MCF 10A (cell line): ENCODE measurements at regions of chr2 and their contacts with region 1.

Region 1: GRCh38 chr2:27303093-27304025 is 4.9 kb downstream of the UCN start:
- DNase-seq: peak; percentile 77
- H3K4me3 Mint-ChIP-seq: peak overlapping the region; percentile 31
- H3K27ac Mint-ChIP-seq: no peak overlapping the region
- H3K4me1 Mint-ChIP-seq: no peaks in the 10 kb centered on the region
- H3K27me3 Mint-ChIP-seq: no peaks in the 10 kb centered on the region
- CTCF ChIP-seq: peak; percentile 76

Region 2: GRCh38 chr2:27074916-27075871 is 228.2 kb before region 1 on chr2:
- CTCF ChIA-PET with region 1: no interaction called
- POLR2A ChIA-PET with region 1: no interaction called
- intact Hi-C with region 1: no loop called
- DNase-seq: no peak
- H3K4me3 Mint-ChIP-seq: no peak overlapping the region
- H3K27ac Mint-ChIP-seq: no peak overlapping the region
- H3K4me1 Mint-ChIP-seq: peaks cover 7% of the 10 kb centered on the region
- H3K27me3 Mint-ChIP-seq: peaks cover 28% of the 10 kb centered on the region
- CTCF ChIP-seq: no peak

Region 3: DNA sequence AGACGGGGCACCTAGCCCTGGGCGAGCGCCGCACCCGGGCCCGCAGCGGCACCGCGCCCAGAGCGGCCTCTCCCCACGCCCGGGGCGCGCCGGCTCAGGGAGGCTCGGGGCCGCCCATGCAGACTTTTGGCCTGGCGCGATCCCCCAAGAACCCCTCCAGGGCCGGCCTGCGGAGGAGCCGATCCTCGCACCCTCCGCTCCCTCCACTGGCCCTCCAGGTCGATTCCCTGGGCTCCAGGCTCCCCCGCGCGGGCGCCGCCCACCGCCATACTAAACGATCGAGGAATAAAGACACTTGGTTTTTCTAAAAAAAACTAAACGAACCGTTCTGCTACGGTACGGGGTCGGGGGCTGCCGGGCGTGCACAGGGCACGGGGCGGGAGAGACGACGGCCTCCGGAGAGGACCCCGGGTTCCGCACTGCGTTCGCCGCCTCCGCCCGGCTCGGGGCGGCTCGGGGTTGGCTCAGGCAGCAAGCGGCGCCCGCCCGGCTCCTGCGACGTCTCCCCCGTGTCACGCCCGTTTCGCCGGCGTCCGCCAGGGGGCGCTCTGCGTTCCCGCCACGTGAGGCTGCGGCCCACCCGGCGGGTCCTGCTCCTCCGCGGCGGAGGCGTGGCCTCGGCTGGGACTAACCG is 217.2 kb before region 1 on chr2:
- CTCF ChIA-PET with region 1: interaction called, 14 read pairs
- POLR2A ChIA-PET with region 1: no interaction called
- intact Hi-C with region 1: no loop called
- DNase-seq: peak; percentile 92
- H3K4me3 Mint-ChIP-seq: peak overlapping the region; percentile 75
- H3K27ac Mint-ChIP-seq: no peak overlapping the region
- H3K4me1 Mint-ChIP-seq: peaks cover 5% of the 10 kb centered on the region
- H3K27me3 Mint-ChIP-seq: no peaks in the 10 kb centered on the region
- CTCF ChIP-seq: peak; percentile 87

Region 4: DNA sequence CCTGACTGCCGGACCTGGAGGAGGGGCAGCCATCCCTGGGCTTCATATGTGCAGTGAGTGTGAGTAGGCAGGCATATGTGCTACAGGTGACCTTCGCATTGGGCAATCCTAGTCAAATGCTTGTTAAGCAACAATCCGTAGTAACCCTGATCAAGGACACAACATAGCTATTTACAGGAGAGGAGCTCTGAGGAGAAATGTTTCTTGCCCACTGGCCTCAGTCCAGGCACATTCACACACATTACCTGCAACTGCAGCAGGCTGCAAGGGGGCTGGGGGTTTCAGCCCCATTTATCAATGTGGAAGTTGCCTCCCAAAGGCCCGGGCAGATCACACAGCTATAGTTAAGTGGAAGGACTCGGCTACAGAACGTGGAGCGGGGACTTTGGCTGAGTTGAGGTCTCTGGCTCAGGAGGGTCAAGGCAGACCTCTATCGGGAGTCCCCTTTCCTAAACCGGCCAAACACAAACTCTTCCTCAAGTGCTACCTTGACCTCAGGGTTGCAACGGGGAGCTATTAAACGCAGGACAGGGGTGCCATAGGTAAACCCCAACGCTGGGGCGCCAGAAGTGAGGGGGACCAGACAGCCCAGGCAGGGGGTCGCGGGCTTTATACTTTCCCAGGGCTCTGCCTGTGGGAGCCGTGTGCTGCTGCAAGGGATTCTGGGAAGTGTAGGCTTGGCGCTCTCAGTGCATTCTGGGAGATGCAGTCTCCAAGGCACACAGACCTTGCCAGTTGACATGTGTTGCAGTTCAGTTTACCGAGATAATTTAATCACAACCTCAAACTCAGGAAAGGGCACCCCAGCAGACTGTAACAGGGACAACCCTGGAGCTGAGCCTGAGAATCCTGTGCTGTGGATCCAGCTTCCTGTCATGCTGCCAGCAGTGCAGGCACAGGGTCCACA is 207.4 kb before region 1 on chr2:
- CTCF ChIA-PET with region 1: interaction called, 52 read pairs
- POLR2A ChIA-PET with region 1: interaction called, 7 read pairs
- intact Hi-C with region 1: loop called (anchors 1 kb)
- DNase-seq: peak; percentile 46
- H3K4me3 Mint-ChIP-seq: no peak overlapping the region
- H3K27ac Mint-ChIP-seq: no peak overlapping the region
- H3K4me1 Mint-ChIP-seq: no peaks in the 10 kb centered on the region
- H3K27me3 Mint-ChIP-seq: no peaks in the 10 kb centered on the region
- CTCF ChIP-seq: no peak

Region 5: GRCh38 chr2:27105981-27106380 is 197.4 kb before region 1 on chr2:
- CTCF ChIA-PET with region 1: interaction called, 52 read pairs
- POLR2A ChIA-PET with region 1: no interaction called
- intact Hi-C with region 1: no loop called
- DNase-seq: no peak
- H3K4me3 Mint-ChIP-seq: no peak overlapping the region
- H3K27ac Mint-ChIP-seq: no peak overlapping the region
- H3K4me1 Mint-ChIP-seq: no peaks in the 10 kb centered on the region
- H3K27me3 Mint-ChIP-seq: no peaks in the 10 kb centered on the region
- CTCF ChIP-seq: no peak

Region 6: GRCh38 chr2:27291865-27292264 is 11.5 kb before region 1 on chr2:
- CTCF ChIA-PET with region 1: interaction called, 32 read pairs
- POLR2A ChIA-PET with region 1: interaction called, 19 read pairs
- intact Hi-C with region 1: no loop called
- DNase-seq: peak; percentile 33
- H3K4me3 Mint-ChIP-seq: no peak overlapping the region
- H3K27ac Mint-ChIP-seq: no peak overlapping the region
- H3K4me1 Mint-ChIP-seq: peaks cover 8% of the 10 kb centered on the region
- H3K27me3 Mint-ChIP-seq: peaks cover 14% of the 10 kb centered on the region
- CTCF ChIP-seq: no peak

Region 7: DNA sequence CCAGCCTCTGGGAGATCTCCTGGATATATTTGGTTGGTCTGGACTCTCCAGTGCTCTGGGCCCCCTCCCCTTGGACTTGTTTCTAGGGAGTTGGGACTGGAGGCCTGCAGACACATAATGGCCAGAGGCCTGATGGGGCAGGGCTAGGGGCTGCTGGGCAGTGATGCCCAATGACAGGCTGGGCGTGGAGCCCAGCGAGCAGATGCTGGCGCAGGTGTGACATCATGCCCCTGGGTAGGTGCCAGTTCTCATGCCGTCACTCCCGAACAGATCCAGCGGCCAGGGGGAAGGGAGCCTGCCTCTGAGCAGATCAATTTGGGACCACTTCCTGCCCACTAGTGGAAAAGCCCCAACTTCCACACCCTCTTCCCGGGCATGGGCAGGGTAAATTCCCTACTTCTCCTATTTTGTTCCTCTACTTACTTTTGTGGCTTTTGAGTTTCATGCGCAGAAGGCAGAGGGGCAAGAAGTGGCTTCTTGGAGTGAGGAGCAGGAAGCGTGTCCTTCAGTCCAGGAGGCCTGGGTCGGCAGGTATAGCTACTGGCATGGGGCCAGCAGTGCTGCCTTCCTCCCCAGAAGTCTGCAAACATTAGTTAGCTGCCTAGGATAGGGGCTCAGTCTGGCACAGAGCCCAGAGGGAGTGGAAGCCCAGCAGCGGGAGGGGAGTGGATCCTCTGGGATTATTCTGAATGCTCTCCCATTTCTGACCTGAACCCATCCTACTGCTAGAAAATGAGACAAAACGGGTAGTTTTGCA is 13.5 kb after region 1 on chr2:
- CTCF ChIA-PET with region 1: interaction called, 23 read pairs
- POLR2A ChIA-PET with region 1: interaction called, 13 read pairs
- intact Hi-C with region 1: no loop called
- DNase-seq: peak; percentile 74
- H3K4me3 Mint-ChIP-seq: no peak overlapping the region
- H3K27ac Mint-ChIP-seq: no peak overlapping the region
- H3K4me1 Mint-ChIP-seq: peaks cover 12% of the 10 kb centered on the region
- H3K27me3 Mint-ChIP-seq: no peaks in the 10 kb centered on the region
- CTCF ChIP-seq: no peak

Region 8: DNA sequence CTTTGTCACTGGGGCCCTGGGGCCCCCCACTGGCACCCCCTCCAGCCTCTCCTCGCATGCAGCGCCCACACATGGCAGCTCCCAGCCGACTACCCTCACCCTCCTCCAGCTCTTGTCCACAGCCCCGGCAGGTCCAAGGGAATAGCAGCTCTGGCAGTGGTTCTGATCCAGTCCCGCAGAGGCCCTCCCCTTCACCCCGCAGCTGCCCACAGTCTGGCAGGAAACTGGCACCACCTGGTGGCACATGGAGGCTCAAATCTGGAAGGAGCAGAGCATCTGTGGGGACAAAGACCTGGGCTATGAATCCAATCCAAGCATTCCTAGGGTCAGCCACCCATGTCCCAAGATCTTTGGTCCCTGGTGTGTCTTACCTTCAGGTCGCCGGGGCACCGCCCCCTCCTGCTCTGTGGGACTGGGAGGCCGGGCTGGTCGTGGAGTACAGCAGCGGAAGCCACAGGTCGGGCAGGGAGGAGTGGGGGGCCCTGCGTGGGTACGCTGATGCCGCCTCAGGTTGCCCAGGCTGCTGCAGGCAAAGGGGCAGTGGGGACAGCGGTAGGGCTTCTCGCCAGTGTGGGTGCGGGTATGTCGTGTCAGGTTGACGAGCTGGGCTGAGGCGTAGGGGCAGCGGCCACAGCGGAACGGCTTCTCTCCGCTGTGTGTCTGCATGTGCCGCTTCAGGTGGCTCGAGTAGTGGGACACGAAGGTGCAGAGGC is 74.9 kb after region 1 on chr2:
- CTCF ChIA-PET with region 1: no interaction called
- POLR2A ChIA-PET with region 1: no interaction called
- intact Hi-C with region 1: no loop called
- DNase-seq: peak; percentile 24
- H3K4me3 Mint-ChIP-seq: no peak overlapping the region
- H3K27ac Mint-ChIP-seq: peak overlapping the region; percentile 63
- H3K4me1 Mint-ChIP-seq: peaks cover 16% of the 10 kb centered on the region
- H3K27me3 Mint-ChIP-seq: no peaks in the 10 kb centered on the region
- CTCF ChIP-seq: peak; percentile 20